ENCODE measurements at regions of chr3 and their contacts with region 1.

Region 1: GRCh38 chr3:172846103-172846561 is 95.6 kb downstream of the ECT2 start:
- DNase-seq: no peak
- H3K4me3 Mint-ChIP-seq: no peak overlapping the region
- H3K27ac Mint-ChIP-seq: no peak overlapping the region
- H3K4me1 Mint-ChIP-seq: peaks cover 14% of the 10 kb centered on the region
- H3K27me3 Mint-ChIP-seq: no peaks in the 10 kb centered on the region
- CTCF ChIP-seq: no peak

Region 2: DNA sequence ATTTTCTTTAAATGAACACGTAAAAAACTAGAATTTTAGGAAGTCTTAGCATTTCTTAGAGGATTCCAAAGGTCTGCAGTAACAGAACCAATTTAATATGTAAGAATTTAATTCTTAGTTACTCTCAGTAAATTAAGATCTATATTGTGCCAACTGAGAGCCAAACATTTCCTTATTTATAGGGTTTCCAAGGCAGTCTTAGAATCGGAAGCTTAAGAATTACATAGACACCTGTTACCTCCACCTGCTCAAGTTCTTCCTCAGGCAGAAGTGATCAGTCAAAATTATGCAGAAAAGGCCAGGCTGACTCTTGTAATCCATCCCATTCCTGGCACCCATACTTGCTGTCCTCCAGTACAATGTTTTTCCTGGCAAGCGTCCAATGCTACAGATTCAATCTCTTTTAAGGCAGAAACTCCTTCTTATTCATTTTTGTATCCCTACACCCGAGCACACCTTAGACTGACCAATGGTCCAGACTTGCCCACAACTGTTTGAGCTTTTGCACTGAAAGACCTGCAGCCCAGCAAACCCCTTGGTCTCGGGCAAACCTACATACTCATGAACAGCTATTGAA is 199.6 kb before region 1 on chr3:
- CTCF ChIA-PET with region 1: interaction called, 10 read pairs
- intact Hi-C with region 1: no loop called
- DNase-seq: peak; percentile 59
- H3K4me3 Mint-ChIP-seq: no peak overlapping the region
- H3K27ac Mint-ChIP-seq: peak overlapping the region; percentile 50
- H3K4me1 Mint-ChIP-seq: peaks cover 41% of the 10 kb centered on the region
- H3K27me3 Mint-ChIP-seq: no peaks in the 10 kb centered on the region
- CTCF ChIP-seq: no peak

Region 3: DNA sequence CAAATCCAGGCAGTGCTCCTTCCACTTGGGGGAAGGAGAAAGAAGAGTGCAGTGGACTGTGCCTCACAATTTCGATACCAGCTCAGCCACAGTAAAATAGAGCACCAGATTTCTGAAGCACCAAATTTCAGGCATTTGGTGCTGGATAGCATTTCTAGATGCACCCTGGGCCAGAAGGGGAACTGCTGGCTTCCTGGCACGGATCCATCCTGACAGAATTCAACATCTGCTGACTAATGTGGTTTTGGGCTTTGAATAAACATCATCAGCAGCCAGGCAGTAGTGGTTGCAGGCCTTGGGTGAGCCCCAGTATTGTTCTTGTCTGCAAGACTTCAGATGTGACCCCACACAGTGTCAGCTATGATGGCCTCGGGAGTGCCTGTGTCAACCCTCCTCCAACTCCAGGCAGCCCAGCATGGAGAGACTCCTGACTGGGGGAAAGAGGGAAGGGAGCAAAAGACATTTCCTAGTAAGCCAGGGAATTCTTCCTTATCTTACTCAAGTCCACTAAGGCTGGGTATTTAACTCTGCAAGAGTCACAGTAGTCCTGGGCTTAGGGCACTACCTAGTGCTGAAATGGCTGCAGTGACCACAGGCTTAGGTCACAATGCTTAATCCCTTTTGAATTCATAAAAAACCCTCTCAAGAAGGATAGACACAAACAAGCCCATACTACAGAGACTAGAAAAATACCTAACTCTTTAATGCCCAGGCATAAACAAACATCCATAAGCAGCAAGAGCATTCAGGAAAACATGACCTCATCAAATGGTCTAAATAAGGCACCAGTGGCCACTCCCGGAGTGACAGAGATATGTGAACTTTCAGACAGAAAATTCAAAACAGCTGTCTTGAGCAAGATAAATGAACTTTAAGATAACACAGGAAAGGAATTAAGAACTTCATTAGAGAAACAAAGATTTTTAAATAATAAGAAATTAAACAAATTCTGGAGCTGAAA is 220.2 kb after region 1 on chr3:
- CTCF ChIA-PET with region 1: no interaction called
- intact Hi-C with region 1: no loop called
- DNase-seq: no peak
- H3K4me3 Mint-ChIP-seq: no peak overlapping the region
- H3K27ac Mint-ChIP-seq: no peak overlapping the region
- H3K4me1 Mint-ChIP-seq: no peaks in the 10 kb centered on the region
- H3K27me3 Mint-ChIP-seq: no peaks in the 10 kb centered on the region
- CTCF ChIP-seq: no peak

Region 4: GRCh38 chr3:173096994-173097785 is 251.1 kb after region 1 on chr3:
- CTCF ChIA-PET with region 1: no interaction called
- intact Hi-C with region 1: no loop called
- DNase-seq: no peak
- H3K4me3 Mint-ChIP-seq: no peak overlapping the region
- H3K27ac Mint-ChIP-seq: no peak overlapping the region
- H3K4me1 Mint-ChIP-seq: no peaks in the 10 kb centered on the region
- H3K27me3 Mint-ChIP-seq: peaks cover 6% of the 10 kb centered on the region
- CTCF ChIP-seq: no peak

Region 5: DNA sequence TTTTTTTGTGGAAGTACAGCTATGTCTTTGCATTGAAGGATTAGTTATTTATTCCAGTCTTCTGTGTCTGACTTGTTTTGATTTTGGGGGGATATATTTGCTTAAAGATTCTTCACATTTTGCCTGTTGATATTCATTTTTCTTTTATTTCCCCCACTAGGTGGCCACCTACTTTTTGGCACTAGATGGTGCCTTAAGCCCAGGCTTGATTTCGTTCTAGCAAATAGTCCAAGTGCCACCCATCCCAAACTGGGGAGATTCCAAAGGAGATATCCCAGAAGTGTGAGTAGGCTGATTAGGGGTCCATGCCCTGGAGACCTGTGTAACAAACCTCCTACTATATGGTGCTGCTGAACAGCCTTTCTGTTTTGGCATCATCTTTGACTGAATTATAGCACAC is 374.9 kb after region 1 on chr3:
- CTCF ChIA-PET with region 1: no interaction called
- intact Hi-C with region 1: loop called (anchors 10 kb)
- DNase-seq: peak; percentile 32
- H3K4me3 Mint-ChIP-seq: no peak overlapping the region
- H3K27ac Mint-ChIP-seq: no peak overlapping the region
- H3K4me1 Mint-ChIP-seq: peaks cover 11% of the 10 kb centered on the region
- H3K27me3 Mint-ChIP-seq: no peaks in the 10 kb centered on the region
- CTCF ChIP-seq: peak; percentile 85

Measured in Calu3 (cell line).